Activated CD4-positive, alpha-beta T cell treated with anti-CD3 and anti-CD28 coated beads, Interleukin-2, amount 10 ng/mL, durations not matched to agents 7 days and 5 days (primary cell): ENCODE measurements at regions of chr12 and their contacts with region 1.

Region 1: GRCh38 chr12:71663561-71664294 is at the start of gene ZFC3H1:
- DNase-seq: peak; percentile 96
- H3K4me3 Mint-ChIP-seq: peak within 1 kb of the TSS; percentile 98
- H3K27ac Mint-ChIP-seq: peak within 1 kb of the TSS; percentile 100
- H3K4me1 Mint-ChIP-seq: peaks cover 43% of the 10 kb centered on the region
- H3K27me3 Mint-ChIP-seq: no peaks in the 10 kb centered on the region
- total RNA-seq, gene ZFC3H1: 55.8 to 66.7 TPM

Region 2: GRCh38 chr12:71636704-71637115 is 27.0 kb before region 1 on chr12:
- CTCF ChIA-PET with region 1: interaction called, 16 read pairs
- POLR2A ChIA-PET with region 1: interaction called, 3 read pairs
- DNase-seq: peak; percentile 42
- H3K4me3 Mint-ChIP-seq: no peak overlapping the region
- H3K27ac Mint-ChIP-seq: no peak overlapping the region
- H3K4me1 Mint-ChIP-seq: peaks cover 13% of the 10 kb centered on the region
- H3K27me3 Mint-ChIP-seq: no peaks in the 10 kb centered on the region

Region 3: GRCh38 chr12:71685914-71686665 is 22.4 kb after region 1 on chr12 and contains the start of gene TMEM19:
- CTCF ChIA-PET with region 1: interaction called, 10 read pairs
- POLR2A ChIA-PET with region 1: interaction called, 8 read pairs
- DNase-seq: peak; percentile 81
- H3K4me3 Mint-ChIP-seq: peak within 1 kb of the TSS; percentile 83
- H3K27ac Mint-ChIP-seq: peak within 1 kb of the TSS; percentile 91
- H3K4me1 Mint-ChIP-seq: peaks cover 39% of the 10 kb centered on the region
- H3K27me3 Mint-ChIP-seq: no peaks in the 10 kb centered on the region
- total RNA-seq, gene TMEM19: 22.4 to 22.7 TPM